HEK293 (cell line): ENCODE measurements at regions of chrX and their contacts with region 1.

Region 1: GRCh38 chrX:71454222-71454621 is 78.7 kb upstream of the OGT start:
- H3K4me3 ChIP-seq: no peak overlapping the region
- H3K27ac ChIP-seq: no peak overlapping the region
- H3K4me1 ChIP-seq: no peaks in the 10 kb centered on the region
- CTCF ChIP-seq: no peak

Region 2: DNA sequence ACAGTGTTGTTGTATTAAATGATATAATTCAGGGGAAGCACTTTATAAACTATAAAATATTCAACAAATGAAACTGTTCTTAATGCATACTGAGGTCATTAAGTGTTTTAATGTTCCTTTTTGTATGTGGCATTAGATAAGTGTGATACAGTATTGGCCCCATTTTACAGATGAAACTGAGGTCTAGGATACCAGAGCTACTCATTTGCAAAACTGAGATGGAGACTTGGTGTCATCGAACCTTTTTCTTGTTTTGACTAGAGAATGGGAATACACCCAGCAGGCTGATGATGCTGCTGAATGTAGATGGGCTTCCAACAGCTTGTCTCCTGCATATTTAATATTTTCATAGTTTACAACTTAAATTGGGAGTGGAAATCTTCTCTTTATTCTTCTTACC is 53.5 kb before region 1 on chrX:
- CTCF ChIA-PET with region 1: no interaction called
- POLR2A ChIA-PET with region 1: interaction called, 10 read pairs
- H3K4me3 ChIP-seq: no peak overlapping the region
- H3K27ac ChIP-seq: no peak overlapping the region
- H3K4me1 ChIP-seq: no peaks in the 10 kb centered on the region
- CTCF ChIP-seq: no peak